ENCODE measurements at regions of chr1 and their contacts with region 1.

Region 1: DNA sequence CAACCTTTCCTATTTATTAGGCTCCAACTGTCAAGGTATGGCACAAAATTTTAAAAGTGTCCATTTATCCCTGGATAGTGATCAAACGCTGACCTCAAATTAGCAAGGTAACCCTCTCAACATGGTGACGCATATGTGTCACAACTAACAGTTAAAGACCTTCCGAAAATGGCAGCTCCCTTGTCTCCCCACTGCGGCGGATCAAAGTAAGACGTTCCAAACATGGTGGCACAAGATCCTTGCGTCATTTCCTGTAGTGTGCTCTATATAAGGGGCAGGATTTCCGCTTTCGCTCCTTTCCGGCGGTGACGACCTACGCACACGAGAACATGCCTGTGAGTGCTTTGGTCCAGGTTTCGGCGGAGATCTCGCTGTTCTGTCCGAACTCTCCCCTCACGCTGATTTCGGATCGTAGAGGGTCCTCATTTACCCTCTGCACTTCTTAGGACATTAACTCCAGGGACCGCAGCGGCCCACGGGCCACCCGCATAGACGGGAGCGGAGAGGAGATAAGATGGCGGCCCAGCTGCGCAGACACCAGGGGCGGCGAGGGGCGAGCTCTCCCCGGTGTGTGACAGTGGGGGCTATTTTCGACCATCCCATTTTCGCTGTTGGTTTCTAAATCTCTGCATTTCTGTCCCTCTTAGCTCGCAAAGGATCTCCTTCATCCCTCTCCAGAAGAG is at the start of gene RPS27:
- DNase-seq: peak; percentile 96
- H3K4me3 ChIP-seq: peak within 1 kb of the TSS; percentile 15 to 86 (median 79)
- H3K27ac ChIP-seq: peak within 1 kb of the TSS; percentile 90
- H3K4me1 ChIP-seq: peaks cover 24% of the 10 kb centered on the region
- H3K27me3 ChIP-seq: no peaks in the 10 kb centered on the region
- CTCF ChIP-seq: no peak
- POLR2A ChIP-seq: peak; percentile 99
- total RNA-seq, gene RPS27: 1,120 and 1,234 TPM in 2 replicates

Region 2: GRCh38 chr1:153572569-153573015 is 418.0 kb before region 1 on chr1:
- CTCF ChIA-PET with region 1: interaction called, 5 read pairs
- POLR2A ChIA-PET with region 1: no interaction called
- dilution Hi-C with region 1: no loop called
- intact Hi-C with region 1: loop called (anchors 2 kb)
- DNase-seq: peak; percentile 93
- H3K4me3 ChIP-seq: no peak overlapping the region
- H3K27ac ChIP-seq: no peak overlapping the region
- H3K4me1 ChIP-seq: peaks cover 15% of the 10 kb centered on the region
- H3K27me3 ChIP-seq: no peaks in the 10 kb centered on the region
- CTCF ChIP-seq: peak; percentile 89 to 96
- POLR2A ChIP-seq: no peak

Region 3: DNA sequence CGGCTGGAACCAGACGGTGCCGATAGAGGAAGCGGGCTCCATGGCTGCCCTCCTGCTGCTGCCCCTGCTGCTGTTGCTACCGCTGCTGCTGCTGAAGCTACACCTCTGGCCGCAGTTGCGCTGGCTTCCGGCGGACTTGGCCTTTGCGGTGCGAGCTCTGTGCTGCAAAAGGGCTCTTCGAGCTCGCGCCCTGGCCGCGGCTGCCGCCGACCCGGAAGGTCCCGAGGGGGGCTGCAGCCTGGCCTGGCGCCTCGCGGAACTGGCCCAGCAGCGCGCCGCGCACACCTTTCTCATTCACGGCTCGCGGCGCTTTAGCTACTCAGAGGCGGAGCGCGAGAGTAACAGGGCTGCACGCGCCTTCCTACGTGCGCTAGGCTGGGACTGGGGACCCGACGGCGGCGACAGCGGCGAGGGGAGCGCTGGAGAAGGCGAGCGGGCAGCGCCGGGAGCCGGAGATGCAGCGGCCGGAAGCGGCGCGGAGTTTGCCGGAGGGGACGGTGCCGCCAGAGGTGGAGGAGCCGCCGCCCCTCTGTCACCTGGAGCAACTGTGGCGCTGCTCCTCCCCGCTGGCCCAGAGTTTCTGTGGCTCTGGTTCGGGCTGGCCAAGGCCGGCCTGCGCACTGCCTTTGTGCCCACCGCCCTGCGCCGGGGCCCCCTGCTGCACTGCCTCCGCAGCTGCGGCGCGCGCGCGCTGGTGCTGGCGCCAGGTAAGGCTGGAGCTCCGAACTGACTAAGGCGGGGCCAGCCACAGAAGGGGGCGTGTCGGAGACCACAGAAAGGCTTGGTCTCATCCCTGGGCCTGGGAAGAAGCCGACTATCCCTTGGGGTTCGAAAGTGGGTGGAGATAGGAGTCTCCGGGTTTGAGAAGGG is 214.9 kb before region 1 on chr1:
- CTCF ChIA-PET with region 1: interaction called, 7 read pairs
- POLR2A ChIA-PET with region 1: no interaction called
- dilution Hi-C with region 1: no loop called
- intact Hi-C with region 1: loop called (anchors 1 kb)
- DNase-seq: peak; percentile 58
- H3K4me3 ChIP-seq: peak overlapping the region; percentile 25 to 63 (median 49)
- H3K27ac ChIP-seq: no peak overlapping the region
- H3K4me1 ChIP-seq: peaks cover 54% of the 10 kb centered on the region
- H3K27me3 ChIP-seq: no peaks in the 10 kb centered on the region
- CTCF ChIP-seq: no peak
- POLR2A ChIP-seq: no peak

Region 4: GRCh38 chr1:153880962-153881361 is 109.6 kb before region 1 on chr1:
- CTCF ChIA-PET with region 1: interaction called, 3 read pairs
- POLR2A ChIA-PET with region 1: interaction called, 3 read pairs
- dilution Hi-C with region 1: no loop called
- intact Hi-C with region 1: loop called (anchors 1 kb)
- DNase-seq: peak; percentile 99
- H3K4me3 ChIP-seq: peak overlapping the region; percentile 12 to 70 (median 32)
- H3K27ac ChIP-seq: peak overlapping the region; percentile 81
- H3K4me1 ChIP-seq: peaks cover 23% of the 10 kb centered on the region
- H3K27me3 ChIP-seq: no peaks in the 10 kb centered on the region
- CTCF ChIP-seq: no peak
- POLR2A ChIP-seq: no peak

Region 5: DNA sequence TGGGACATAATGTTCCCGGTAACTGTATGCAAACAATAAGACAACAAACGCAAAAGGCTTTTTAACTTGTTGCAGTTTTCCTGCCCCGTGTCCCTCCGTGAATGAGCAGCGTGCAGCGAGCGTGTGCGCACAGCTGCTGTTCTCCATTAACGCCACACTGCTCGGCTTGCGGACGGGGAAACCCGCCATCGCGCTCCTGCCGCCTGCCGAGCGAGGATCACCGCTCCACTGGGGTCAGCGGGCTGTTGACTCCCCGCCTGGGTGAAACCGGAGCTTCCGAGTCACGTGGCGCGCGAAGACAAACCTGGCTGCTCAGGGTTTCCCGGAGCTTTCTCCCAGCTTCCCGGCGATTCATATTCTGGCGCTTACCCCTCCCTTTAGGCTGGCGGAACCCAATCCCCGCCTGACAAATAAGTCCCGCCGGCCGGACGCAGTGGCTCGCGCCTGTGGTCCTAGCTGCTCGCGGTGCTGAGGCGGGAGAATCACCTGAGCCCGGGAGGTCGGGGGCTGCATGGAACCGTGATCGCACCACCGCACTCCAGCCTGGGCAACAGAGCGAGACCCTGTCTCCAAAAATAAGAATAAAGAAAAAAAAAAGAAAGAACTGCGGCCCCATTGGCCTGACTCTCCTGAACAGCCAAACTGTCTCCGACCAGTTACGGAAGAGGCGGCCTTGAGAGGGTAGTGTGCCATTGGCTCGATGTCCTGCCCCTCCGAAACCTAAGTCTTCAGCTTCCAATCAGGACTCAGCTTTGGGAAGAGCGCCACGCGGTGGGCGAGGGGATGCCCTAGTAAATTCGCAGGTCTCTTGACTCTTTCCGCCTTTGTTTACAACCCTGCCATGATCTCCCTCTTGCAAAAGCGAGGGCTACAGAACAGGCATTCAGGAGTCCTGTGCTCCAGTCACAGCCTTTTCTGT is 23.3 kb before region 1 on chr1 and contains the start of gene CREB3L4:
- CTCF ChIA-PET with region 1: interaction called, 20 read pairs
- POLR2A ChIA-PET with region 1: interaction called, 8 read pairs
- dilution Hi-C with region 1: no loop called
- intact Hi-C with region 1: loop called (anchors 1 kb)
- DNase-seq: peak; percentile 97
- H3K4me3 ChIP-seq: peak within 1 kb of the TSS; percentile 42 to 68 (median 62)
- H3K27ac ChIP-seq: peak within 1 kb of the TSS; percentile 29
- H3K4me1 ChIP-seq: peaks cover 34% of the 10 kb centered on the region
- H3K27me3 ChIP-seq: no peaks in the 10 kb centered on the region
- CTCF ChIP-seq: peak in 1 of 2 donors; percentile 51
- POLR2A ChIP-seq: peak; percentile 73
- total RNA-seq, gene CREB3L4: 8.1 and 9.9 TPM in 2 replicates

Region 6: GRCh38 chr1:154183045-154183915 is 192.7 kb after region 1 on chr1:
- CTCF ChIA-PET with region 1: no interaction called
- POLR2A ChIA-PET with region 1: no interaction called
- dilution Hi-C with region 1: no loop called
- intact Hi-C with region 1: loop called (anchors 5 kb)
- DNase-seq: peak; percentile 95
- H3K4me3 ChIP-seq: peak overlapping the region; percentile 87 to 99 (median 93)
- H3K27ac ChIP-seq: peak overlapping the region; percentile 64
- H3K4me1 ChIP-seq: peaks cover 30% of the 10 kb centered on the region
- H3K27me3 ChIP-seq: peaks cover 0 to 3% of the 10 kb centered on the region in 2 experiments
- CTCF ChIP-seq: no peak
- POLR2A ChIP-seq: peak; percentile 72

Region 7: DNA sequence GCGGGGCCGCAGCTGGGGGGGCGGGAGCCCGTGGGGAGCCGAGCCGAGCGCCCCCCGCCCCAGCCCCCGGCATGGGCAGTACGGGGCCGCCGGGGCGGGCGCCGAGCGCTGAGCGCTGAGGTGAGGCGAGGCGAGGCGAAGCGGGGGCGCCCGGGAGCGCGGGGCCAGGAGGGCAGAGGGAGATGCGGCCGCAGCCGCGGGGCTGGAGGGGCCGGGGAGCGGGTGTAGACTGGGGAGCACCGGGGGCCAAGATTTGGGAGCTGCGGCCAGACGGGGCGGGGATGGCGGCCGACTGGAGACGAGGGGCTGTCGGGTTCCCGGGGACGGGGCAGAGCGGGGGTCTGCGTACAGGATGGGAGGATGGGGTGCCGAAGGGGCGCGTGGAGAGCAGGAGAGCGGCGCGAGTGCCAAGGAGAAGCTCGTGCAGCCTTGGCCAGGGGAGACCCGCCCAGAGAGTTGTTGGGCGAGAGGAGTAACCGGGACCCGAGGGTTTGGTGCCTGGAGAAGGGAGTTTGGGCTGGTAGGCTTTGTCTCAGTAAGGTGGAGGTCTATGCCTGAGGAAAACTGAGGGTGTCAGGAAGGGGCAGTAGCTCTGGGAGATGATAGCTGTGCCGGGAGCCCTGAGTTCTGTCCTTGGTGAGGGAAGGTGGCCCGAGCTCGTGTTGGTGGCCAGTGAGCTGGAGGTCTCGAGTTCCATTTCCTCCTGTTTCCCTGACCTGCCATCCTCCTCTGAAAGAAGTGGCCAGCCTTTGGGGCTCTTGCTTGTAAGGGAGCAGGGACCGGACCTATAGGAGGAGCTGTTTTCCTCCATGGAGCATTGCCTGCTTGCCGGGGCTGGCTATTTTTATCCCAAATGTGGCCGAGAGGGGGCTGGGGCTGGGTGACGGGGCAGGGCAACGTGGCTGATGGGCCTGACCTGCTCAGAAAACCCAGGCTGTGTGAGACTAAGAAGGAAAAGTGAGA is 335.3 kb after region 1 on chr1:
- CTCF ChIA-PET with region 1: no interaction called
- POLR2A ChIA-PET with region 1: no interaction called
- dilution Hi-C with region 1: no loop called
- intact Hi-C with region 1: no loop called
- DNase-seq: peak; percentile 83
- H3K4me3 ChIP-seq: peak overlapping the region; percentile 45 to 88 (median 75)
- H3K27ac ChIP-seq: peak overlapping the region; percentile 52
- H3K4me1 ChIP-seq: peaks cover 22% of the 10 kb centered on the region
- H3K27me3 ChIP-seq: peaks cover 0 to 8% of the 10 kb centered on the region in 2 experiments
- CTCF ChIP-seq: peak; percentile 57 to 83
- POLR2A ChIP-seq: peak; percentile 45